Activated CD8-positive, alpha-beta T cell treated with anti-CD3 and anti-CD28 coated beads for 36 hours (primary cell): ENCODE measurements at regions of chr5 and their contacts with region 1.

Region 1: GRCh38 chr5:73201547-73202513 is 28.8 kb downstream of the TMEM174 start:
- DNase-seq: peak; percentile 74
- ATAC-seq: peak; percentile 97
- H3K4me3 Mint-ChIP-seq: no peak overlapping the region
- H3K27ac Mint-ChIP-seq: no peak overlapping the region
- H3K4me1 Mint-ChIP-seq: peaks cover 4% of the 10 kb centered on the region
- H3K27me3 Mint-ChIP-seq: peaks cover 58% of the 10 kb centered on the region
- CTCF ChIP-seq: peak; percentile 91

Region 2: DNA sequence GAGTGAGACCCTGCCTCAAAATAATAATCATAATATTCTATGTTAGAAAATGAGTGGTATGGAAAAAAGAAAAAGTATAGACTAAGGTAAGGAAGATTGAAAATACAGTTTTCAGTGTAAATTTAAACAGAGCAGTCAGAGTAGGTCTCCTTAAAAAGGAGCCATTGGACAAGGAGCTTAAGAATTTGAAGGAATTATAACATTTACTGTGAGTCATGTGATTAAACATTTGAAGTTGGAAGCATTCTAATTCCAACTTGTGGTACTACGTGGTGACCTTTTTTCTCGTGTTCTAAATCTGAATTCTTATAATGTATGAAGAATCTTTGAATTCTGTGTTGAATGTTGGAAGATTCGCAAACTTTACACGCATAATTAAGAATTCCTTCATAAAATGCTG is 120.7 kb before region 1 on chr5:
- CTCF ChIA-PET with region 1: interaction called, 11 read pairs
- POLR2A ChIA-PET with region 1: no interaction called
- intact Hi-C with region 1: loop called (anchors 5 kb)
- DNase-seq: no peak
- ATAC-seq: no peak
- H3K4me3 Mint-ChIP-seq: no peak overlapping the region
- H3K27ac Mint-ChIP-seq: no peak overlapping the region
- H3K4me1 Mint-ChIP-seq: no peaks in the 10 kb centered on the region
- H3K27me3 Mint-ChIP-seq: peaks cover 8% of the 10 kb centered on the region
- CTCF ChIP-seq: no peak

Region 3: DNA sequence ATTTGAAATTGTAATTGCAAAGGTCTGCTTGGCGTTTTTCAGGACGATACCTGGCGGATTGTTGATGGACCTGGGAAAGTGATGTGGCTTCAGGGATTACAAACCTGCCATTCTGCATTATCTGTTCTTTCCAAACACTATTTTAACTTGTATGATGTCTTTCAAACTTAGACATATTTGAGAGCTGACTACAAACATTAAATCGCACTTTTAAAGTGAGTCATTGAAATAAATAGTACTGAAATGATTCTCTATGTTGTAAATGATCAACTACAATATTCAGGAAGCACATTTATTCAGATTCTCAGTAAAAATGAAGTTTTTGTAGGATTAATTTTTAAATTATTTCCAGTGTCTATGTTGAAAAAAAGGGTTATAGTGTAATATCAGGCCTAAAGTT is 113.8 kb before region 1 on chr5:
- CTCF ChIA-PET with region 1: interaction called, 11 read pairs
- POLR2A ChIA-PET with region 1: no interaction called
- intact Hi-C with region 1: loop called (anchors 5 kb)
- DNase-seq: no peak
- ATAC-seq: no peak
- H3K4me3 Mint-ChIP-seq: no peak overlapping the region
- H3K27ac Mint-ChIP-seq: no peak overlapping the region
- H3K4me1 Mint-ChIP-seq: no peaks in the 10 kb centered on the region
- H3K27me3 Mint-ChIP-seq: peaks cover 21% of the 10 kb centered on the region
- CTCF ChIP-seq: no peak

Region 4: GRCh38 chr5:73250645-73251044 is 48.8 kb after region 1 on chr5:
- CTCF ChIA-PET with region 1: no interaction called
- POLR2A ChIA-PET with region 1: no interaction called
- intact Hi-C with region 1: no loop called
- DNase-seq: no peak
- ATAC-seq: no peak
- H3K4me3 Mint-ChIP-seq: no peak overlapping the region
- H3K27ac Mint-ChIP-seq: no peak overlapping the region
- H3K4me1 Mint-ChIP-seq: no peaks in the 10 kb centered on the region
- H3K27me3 Mint-ChIP-seq: peaks cover 55% of the 10 kb centered on the region
- CTCF ChIP-seq: no peak